ENCODE measurements at regions of chr1 and their contacts with region 1.

Region 1: DNA sequence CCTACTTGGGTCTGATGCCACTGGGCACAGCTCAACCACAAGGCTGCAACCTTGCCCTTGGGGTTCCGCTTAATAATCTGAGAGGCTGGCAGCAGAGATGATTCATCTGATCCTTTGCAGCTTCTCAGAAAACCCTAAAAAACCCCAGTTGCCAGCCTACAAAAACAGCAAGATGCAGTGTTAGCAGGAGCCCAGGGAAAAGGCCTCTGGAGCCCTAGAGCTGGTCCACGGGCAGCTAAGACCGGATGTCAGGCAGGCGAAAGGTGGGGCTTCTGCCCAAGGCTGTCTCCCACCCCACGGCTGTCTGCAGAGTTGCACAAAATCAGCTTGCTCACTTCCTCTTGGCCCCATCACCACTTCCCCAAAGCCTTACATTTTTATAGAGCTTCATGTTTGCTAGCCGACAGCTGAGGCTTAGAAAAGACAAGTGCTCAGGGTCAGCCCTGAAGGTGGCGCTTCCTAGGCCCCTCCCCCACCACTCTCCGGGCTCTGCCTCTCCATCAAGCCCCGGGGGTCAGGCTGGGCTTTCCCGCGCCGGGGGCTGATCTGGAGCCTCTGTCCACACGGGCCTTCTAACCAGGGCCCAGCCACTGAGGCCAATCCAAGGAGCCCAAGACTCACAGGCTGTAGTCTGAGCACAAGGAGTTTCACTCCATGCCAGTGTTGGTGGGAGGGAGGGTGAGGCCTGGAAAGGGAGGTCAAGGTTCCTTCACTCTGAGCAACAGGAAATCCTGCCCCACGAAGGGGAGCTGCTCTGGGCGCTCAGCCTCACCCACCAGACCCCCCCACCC is 4.2 kb upstream of the ADORA3 start:
- DNase-seq: peak; percentile 89 to 97 (median 96)
- H3K4me3 ChIP-seq: peak overlapping the region in 6 of 7 experiments; percentile 35 to 72 (median 64)
- H3K27ac ChIP-seq: peak overlapping the region; percentile 84 to 93
- H3K4me1 ChIP-seq: peaks cover 37 to 97% (median 91%) of the 10 kb centered on the region in 4 experiments
- H3K27me3 ChIP-seq: no peaks in the 10 kb centered on the region

Region 2: GRCh38 chr1:111422566-111423391 is 84.8 kb before region 1 on chr1:
- CTCF ChIA-PET with region 1: no interaction called
- POLR2A ChIA-PET with region 1: no interaction called
- DNase-seq: no peak
- H3K4me3 ChIP-seq: no peak overlapping the region
- H3K27ac ChIP-seq: no peak overlapping the region
- H3K4me1 ChIP-seq: no peaks in the 10 kb centered on the region
- H3K27me3 ChIP-seq: no peaks in the 10 kb centered on the region

Region 3: DNA sequence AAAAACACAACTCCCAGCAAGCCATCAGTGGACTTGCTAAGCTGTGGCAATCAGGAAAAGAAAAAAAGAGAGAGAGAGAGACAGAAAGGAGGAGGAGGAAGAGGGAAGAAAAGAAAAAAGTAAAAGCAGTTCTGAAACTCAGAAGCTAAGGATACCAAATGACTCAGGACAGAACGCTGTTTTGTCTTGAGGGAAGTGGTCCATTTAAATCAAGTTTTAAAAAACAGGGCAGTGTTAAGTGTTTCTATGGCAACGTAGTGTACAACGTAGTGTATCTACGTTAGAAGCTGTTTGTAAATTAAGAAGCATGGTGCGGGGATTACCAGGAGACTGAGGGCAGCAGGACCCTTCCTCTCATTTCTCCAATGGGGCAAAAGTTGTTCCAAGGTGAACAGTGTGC is 10.0 kb before region 1 on chr1:
- CTCF ChIA-PET with region 1: interaction called, 41 read pairs
- POLR2A ChIA-PET with region 1: interaction called, 3 read pairs
- DNase-seq: peak in 2 of 3 donors; percentile 49 to 61
- H3K4me3 ChIP-seq: no peak overlapping the region
- H3K27ac ChIP-seq: no peak overlapping the region
- H3K4me1 ChIP-seq: peaks cover 3 to 26% (median 11%) of the 10 kb centered on the region in 4 experiments
- H3K27me3 ChIP-seq: no peaks in the 10 kb centered on the region

Region 4: GRCh38 chr1:111625263-111625662 is 117.7 kb after region 1 on chr1:
- CTCF ChIA-PET with region 1: interaction called, 28 read pairs
- POLR2A ChIA-PET with region 1: interaction called, 6 read pairs
- DNase-seq: peak in 1 of 3 donors; percentile 16
- H3K4me3 ChIP-seq: no peak overlapping the region
- H3K27ac ChIP-seq: peak overlapping the region in 1 of 2 experiments; percentile 44
- H3K4me1 ChIP-seq: peaks cover 20 to 66% (median 52%) of the 10 kb centered on the region in 4 experiments
- H3K27me3 ChIP-seq: no peaks in the 10 kb centered on the region

Region 5: GRCh38 chr1:111666841-111667270 is 159.2 kb after region 1 on chr1:
- CTCF ChIA-PET with region 1: interaction called, 22 read pairs
- POLR2A ChIA-PET with region 1: no interaction called
- DNase-seq: no peak
- H3K4me3 ChIP-seq: no peak overlapping the region
- H3K27ac ChIP-seq: no peak overlapping the region
- H3K4me1 ChIP-seq: peaks cover 12 to 27% (median 17%) of the 10 kb centered on the region in 4 experiments
- H3K27me3 ChIP-seq: no peaks in the 10 kb centered on the region

Region 6: GRCh38 chr1:111695801-111696200 is 188.2 kb after region 1 on chr1:
- CTCF ChIA-PET with region 1: interaction called, 12 read pairs
- POLR2A ChIA-PET with region 1: interaction called, 3 read pairs
- DNase-seq: no peak
- H3K4me3 ChIP-seq: no peak overlapping the region
- H3K27ac ChIP-seq: no peak overlapping the region
- H3K4me1 ChIP-seq: peaks cover 0 to 2% (median 0%) of the 10 kb centered on the region in 4 experiments
- H3K27me3 ChIP-seq: no peaks in the 10 kb centered on the region

Measured in common myeloid progenitor, CD34-positive (primary cell).